ENCODE measurements at regions of chr7 and their contacts with region 1.

Region 1: DNA sequence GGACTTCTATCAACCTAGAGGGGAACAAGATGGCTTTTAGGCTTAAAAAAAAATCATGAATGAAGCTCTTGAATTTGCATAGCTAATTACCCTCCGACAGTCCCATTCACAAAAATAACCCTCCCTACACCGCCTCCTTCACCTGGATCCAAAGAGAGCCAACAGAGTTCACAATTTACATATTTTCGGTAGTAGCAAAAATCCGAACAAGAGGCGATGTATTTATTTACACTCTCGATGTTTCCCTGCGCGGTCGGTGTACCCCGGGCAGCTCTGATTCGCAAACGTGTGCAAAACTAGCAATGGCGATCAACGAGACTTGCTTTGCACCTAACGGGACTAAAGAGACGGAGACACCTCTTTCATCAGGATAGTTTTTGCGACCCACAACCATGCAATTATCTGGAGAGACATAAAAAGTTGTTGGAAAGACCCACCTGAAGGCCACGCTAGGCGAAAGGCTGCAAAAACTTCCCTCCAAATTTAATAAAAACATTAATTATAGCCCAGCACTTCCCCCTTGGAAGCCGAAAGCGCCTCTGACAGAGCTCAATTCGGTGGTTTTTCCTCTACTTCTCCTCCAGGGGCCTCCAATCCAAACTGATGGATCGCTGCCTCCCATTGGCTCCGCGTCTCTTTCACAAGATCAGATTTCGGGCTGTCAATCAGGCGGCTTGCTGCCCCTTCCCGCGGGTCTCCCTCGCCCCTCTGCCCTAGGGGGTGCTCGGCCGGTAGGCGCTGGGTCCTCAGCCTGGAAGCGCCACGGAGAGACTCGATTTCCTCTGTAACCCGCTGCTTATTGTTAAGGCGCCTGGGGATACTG is at the start of gene ETV1:
- DNase-seq: peak; percentile 69 to 84 (median 82)
- ATAC-seq: peak; percentile 57 to 66
- H3K4me3 ChIP-seq: peak within 1 kb of the TSS; percentile 56
- H3K27ac ChIP-seq: peak within 1 kb of the TSS; percentile 72
- H3K4me1 ChIP-seq: no peaks in the 10 kb centered on the region
- H3K27me3 ChIP-seq: no peaks in the 10 kb centered on the region
- total RNA-seq, gene ETV1: 33.6 to 47.5 (median 41.9) TPM

Region 2: GRCh38 chr7:13560441-13560840 is 428.9 kb before region 1 on chr7:
- intact Hi-C with region 1: no loop called
- DNase-seq: no peak
- ATAC-seq: no peak
- H3K4me3 ChIP-seq: no peak overlapping the region
- H3K27ac ChIP-seq: no peak overlapping the region
- H3K4me1 ChIP-seq: no peaks in the 10 kb centered on the region
- H3K27me3 ChIP-seq: no peaks in the 10 kb centered on the region

Region 3: GRCh38 chr7:14085901-14086300 is 96.6 kb after region 1 on chr7:
- intact Hi-C with region 1: no loop called
- DNase-seq: no peak
- ATAC-seq: no peak
- H3K4me3 ChIP-seq: no peak overlapping the region
- H3K27ac ChIP-seq: no peak overlapping the region
- H3K4me1 ChIP-seq: no peaks in the 10 kb centered on the region
- H3K27me3 ChIP-seq: no peaks in the 10 kb centered on the region

Region 4: GRCh38 chr7:14457568-14458453 is 468.5 kb after region 1 on chr7:
- intact Hi-C with region 1: loop called in 1 of 4 experiments (anchors 5 kb)
- DNase-seq: peak; percentile 51 to 78 (median 54)
- ATAC-seq: peak; percentile 78 to 79
- H3K4me3 ChIP-seq: peak overlapping the region; percentile 43
- H3K27ac ChIP-seq: no peak overlapping the region
- H3K4me1 ChIP-seq: no peaks in the 10 kb centered on the region
- H3K27me3 ChIP-seq: no peaks in the 10 kb centered on the region

Measured in right cardiac atrium (tissue), 5 donors.